ENCODE measurements at regions of chr19 and their contacts with region 1.

Region 1: GRCh38 chr19:53792721-53793433 is 31.2 kb downstream of the NLRP12 start:
- DNase-seq: peak; percentile 76
- CTCF ChIP-seq: peak; percentile 86

Region 2: DNA sequence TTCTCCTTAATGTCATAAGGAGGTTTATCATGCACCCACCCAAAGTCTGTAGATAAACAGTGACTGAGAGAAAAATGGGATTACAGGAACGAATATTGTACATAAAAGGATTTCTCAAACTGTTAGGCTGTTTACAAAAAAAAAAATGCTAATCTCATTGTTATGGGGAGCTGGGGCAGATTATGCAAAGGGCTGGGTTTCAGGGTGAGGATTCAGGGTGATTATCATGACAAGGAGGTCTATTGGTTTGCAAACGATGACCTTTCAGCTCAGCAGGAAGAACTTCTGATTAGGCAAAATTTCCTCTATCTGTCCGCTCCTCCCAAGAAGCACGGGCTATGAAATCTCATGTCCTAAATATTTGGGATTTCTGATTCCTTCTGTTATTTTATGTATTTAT is 10.2 kb before region 1 on chr19:
- CTCF ChIA-PET with region 1: interaction called, 13 read pairs
- POLR2A ChIA-PET with region 1: no interaction called
- DNase-seq: no peak
- CTCF ChIP-seq: no peak

Region 3: DNA sequence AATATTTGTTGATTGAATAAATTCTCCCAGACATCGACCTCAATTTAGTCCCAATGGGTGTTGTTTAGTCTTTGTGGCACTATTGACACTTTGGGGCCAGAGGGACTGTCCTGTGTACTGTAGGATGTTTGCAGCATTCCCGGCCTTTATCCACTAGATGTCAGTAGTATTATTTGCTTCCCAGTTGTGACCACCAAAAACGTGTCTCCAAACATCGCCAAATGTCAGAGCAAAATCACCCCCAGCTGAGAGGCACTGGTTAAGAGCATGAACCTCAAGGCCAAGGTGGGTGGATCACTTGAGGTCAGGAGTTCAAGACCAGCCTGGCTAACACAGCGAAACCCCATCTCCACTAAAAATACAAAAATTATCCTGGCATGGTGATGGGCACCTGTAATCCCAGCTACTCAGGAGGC is 15.8 kb after region 1 on chr19:
- CTCF ChIA-PET with region 1: interaction called, 13 read pairs
- POLR2A ChIA-PET with region 1: no interaction called
- DNase-seq: no peak
- CTCF ChIP-seq: no peak

Region 4: DNA sequence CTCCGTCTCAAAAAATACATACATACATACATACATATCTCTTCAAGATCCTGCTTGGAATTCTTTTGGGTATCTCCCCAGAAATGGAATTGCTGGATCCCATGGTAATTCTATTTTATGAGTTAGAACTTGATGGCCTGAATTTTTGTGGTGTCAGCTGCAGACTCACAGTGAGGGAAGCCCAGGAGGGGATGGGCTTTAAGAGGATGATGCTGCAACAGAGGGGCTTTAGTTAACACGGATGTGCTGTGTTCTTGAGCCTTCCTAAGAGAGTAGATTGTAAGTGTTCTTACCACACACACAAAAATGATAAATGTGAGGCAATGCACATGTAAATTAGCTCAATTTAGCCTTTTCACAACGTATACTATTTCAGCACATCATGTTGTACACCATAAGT is 230.3 kb after region 1 on chr19:
- CTCF ChIA-PET with region 1: interaction called, 36 read pairs
- POLR2A ChIA-PET with region 1: no interaction called
- DNase-seq: no peak
- CTCF ChIP-seq: no peak

Region 5: DNA sequence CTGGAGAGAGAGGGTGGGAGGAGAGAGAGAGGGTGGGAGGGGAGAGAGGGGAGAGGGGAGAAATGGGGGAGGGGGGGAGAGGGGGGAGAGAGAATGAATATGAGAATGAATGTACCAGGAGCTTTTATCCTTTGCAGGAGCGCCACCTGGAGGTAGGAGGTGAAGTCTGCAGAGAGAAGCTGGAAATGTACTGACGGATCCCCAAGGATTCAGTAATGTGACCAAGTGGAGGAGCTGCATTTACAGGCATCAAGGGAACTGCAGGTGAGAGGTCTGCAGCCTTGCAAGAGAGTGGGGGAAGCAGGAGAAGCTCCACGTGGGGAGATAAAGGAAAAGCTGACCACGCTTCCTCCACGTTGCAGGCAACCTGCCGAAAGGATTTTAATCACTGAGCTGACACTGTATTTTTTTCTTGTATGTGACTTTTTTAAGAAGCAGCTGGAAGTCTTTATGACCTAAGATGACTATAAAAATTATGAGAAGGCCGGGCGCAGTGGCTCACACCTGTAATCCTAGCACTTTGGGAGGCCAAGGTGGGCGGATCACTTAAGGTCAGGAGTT is 237.1 kb after region 1 on chr19:
- CTCF ChIA-PET with region 1: interaction called, 36 read pairs
- POLR2A ChIA-PET with region 1: no interaction called
- DNase-seq: peak; percentile 41
- CTCF ChIP-seq: peak; percentile 49

Measured in GM10248 (cell line).